ENCODE measurements at regions of chr13 and their contacts with region 1.

Region 1: GRCh38 chr13:31649766-31650165 is 89.6 kb upstream of the RXFP2 start:
- DNase-seq: no peak
- ATAC-seq: no peak
- H3K4me3 ChIP-seq: no peak overlapping the region
- H3K27ac ChIP-seq: no peak overlapping the region
- H3K4me1 ChIP-seq: no peaks in the 10 kb centered on the region
- H3K27me3 ChIP-seq: no peaks in the 10 kb centered on the region
- CTCF ChIP-seq: no peak

Region 2: GRCh38 chr13:31638577-31638976 is 11.2 kb before region 1 on chr13:
- CTCF ChIA-PET with region 1: no interaction called
- POLR2A ChIA-PET with region 1: no interaction called
- in situ Hi-C with region 1: no loop called
- intact Hi-C with region 1: no loop called
- DNase-seq: no peak
- ATAC-seq: no peak
- H3K4me3 ChIP-seq: no peak overlapping the region
- H3K27ac ChIP-seq: no peak overlapping the region
- H3K4me1 ChIP-seq: no peaks in the 10 kb centered on the region
- H3K27me3 ChIP-seq: no peaks in the 10 kb centered on the region
- CTCF ChIP-seq: no peak

Region 3: DNA sequence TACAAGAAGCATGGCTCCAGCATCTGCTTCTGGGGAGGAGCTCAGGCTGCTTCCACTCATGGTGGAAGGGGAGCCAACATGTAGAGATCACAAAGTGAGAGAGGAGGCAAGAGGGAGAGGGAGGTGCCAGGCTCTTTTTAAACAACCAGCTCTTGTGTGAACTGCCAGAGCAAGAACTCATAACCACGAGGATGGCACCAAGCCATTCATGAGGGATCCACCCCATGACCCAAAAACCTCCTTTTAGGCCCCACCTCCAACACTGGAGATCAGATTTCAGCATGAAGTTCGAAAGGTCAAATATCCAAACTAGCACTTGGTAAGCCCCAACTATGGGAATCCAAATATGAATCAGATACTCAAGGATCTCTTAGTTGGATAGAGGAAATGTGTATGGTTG is 220.7 kb after region 1 on chr13:
- CTCF ChIA-PET with region 1: no interaction called
- POLR2A ChIA-PET with region 1: interaction called, 14 read pairs
- in situ Hi-C with region 1: no loop called
- intact Hi-C with region 1: no loop called
- DNase-seq: no peak
- ATAC-seq: no peak
- H3K4me3 ChIP-seq: no peak overlapping the region
- H3K27ac ChIP-seq: no peak overlapping the region
- H3K4me1 ChIP-seq: no peaks in the 10 kb centered on the region
- H3K27me3 ChIP-seq: no peaks in the 10 kb centered on the region; the same call in none of the 2 replicates
- CTCF ChIP-seq: no peak